GM10248 (cell line): ENCODE measurements at regions of chr4 and their contacts with region 1.

Region 1: GRCh38 chr4:87093443-87094123 is 126.8 kb downstream of the KLHL8 start:
- DNase-seq: peak; percentile 73
- CTCF ChIP-seq: peak; percentile 56

Region 2: DNA sequence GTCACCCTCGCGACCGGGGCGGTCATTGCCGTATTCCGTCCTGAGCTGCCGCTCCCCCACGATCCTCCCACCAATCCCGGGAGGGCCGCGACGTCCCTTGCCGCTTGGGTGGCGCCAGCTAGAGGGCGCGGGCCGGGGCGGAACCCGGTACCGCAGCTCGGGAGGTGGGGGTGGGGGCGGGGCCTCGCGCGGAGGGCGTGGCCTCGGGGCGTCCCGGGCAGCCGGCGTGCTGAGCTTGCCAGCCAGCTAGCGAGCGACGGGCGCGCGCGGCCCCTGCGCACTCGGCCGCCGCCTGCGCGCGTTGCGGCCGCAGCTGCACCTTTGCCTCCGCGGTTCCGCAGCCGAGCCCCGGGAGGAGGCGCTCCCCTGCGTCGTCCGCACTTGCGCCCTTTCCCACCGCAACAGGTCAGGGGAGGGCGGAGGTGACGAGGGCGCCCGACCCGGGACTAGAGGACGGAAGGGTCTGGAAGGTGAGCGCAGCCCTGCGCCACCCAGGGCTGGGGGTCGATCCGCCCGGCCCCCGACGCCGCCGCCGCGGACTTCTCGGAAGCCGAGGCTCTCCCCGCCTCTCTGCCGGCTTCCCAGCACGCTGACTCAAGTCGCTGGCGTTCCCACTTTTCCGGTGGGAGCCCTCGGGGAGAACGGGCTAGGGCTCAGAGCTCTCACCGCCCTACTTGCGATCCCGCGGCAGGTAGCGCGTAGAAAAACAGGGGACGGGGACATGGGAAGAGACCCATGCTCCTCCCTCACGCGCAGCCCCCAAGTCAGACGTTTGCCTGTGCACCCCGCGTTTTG is 158.6 kb before region 1 on chr4 and contains the start of gene AFF1:
- CTCF ChIA-PET with region 1: interaction called, 54 read pairs
- POLR2A ChIA-PET with region 1: no interaction called
- DNase-seq: peak; percentile 91
- CTCF ChIP-seq: peak; percentile 55

Region 3: GRCh38 chr4:87058356-87059073 is 35.1 kb before region 1 on chr4:
- CTCF ChIA-PET with region 1: interaction called, 25 read pairs
- POLR2A ChIA-PET with region 1: no interaction called
- DNase-seq: no peak
- CTCF ChIP-seq: no peak

Region 4: DNA sequence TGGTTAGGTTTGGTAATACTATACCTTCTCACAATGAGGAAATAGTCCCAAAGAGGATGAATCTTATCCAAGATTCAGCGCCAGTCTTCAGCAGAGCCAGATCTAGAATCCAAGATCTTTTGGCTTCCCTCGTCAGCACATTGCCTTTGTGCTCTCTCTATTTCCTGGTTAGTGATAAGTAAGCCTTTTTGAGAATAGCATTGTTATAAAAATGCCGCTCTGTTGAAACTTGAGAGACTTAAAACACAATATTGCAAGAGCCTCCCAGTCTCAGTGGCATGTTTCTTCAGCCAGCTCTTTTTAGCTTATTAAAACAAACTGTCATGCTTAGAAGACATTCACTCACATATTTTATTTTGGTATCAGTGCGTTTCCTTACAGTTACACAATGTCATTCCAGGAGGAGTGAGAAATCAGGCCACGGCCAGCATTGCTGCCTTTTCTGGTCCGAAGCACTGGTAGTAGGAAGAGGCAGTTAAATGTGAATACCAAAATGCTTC is 14.5 kb before region 1 on chr4:
- CTCF ChIA-PET with region 1: interaction called, 39 read pairs
- POLR2A ChIA-PET with region 1: no interaction called
- DNase-seq: no peak
- CTCF ChIP-seq: no peak

Region 5: DNA sequence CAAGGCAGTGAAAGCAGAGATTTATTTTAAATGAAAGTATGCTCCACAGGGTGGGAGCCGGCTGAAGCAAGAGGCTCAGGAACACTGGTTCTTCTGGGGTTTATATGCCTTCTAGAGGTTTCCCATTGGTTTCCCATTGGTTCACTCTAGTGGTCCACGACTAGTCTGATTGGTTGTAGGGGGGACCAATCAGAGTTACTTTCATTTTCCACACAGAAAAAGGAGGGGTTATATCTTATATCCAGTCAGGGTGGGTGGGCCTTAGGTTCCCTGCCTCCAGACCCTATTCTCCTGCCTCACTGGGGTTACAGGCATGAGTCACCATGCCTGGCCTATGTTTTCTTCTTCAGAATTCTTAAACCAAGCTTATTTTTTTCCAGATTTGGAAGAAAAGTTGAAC is 25.2 kb after region 1 on chr4:
- CTCF ChIA-PET with region 1: interaction called, 18 read pairs
- POLR2A ChIA-PET with region 1: no interaction called
- DNase-seq: no peak
- CTCF ChIP-seq: no peak